Upper lobe of right lung (tissue), 1 donor: ENCODE measurements at regions of chr6 and their contacts with region 1.

Region 1: GRCh38 chr6:157314705-157315321 is 8.5 kb downstream of the TMEM242 start:
- DNase-seq: no peak
- ATAC-seq: peak; percentile 71
- H3K4me3 ChIP-seq: no peak overlapping the region
- H3K27ac ChIP-seq: no peak overlapping the region
- H3K4me1 ChIP-seq: peaks cover 10% of the 10 kb centered on the region
- H3K27me3 ChIP-seq: no peaks in the 10 kb centered on the region
- CTCF ChIP-seq: peak; percentile 81

Region 2: GRCh38 chr6:157597446-157598312 is 282.9 kb after region 1 on chr6:
- intact Hi-C with region 1: loop called (anchors 5 kb)
- DNase-seq: no peak
- ATAC-seq: peak; percentile 73
- H3K4me3 ChIP-seq: no peak overlapping the region
- H3K27ac ChIP-seq: peak overlapping the region; percentile 20
- H3K4me1 ChIP-seq: peaks cover 11% of the 10 kb centered on the region
- H3K27me3 ChIP-seq: no peaks in the 10 kb centered on the region
- CTCF ChIP-seq: peak; percentile 54

Region 3: GRCh38 chr6:157644043-157644810 is 329.4 kb after region 1 on chr6:
- intact Hi-C with region 1: loop called (anchors 10 kb)
- DNase-seq: no peak
- ATAC-seq: peak; percentile 13
- H3K4me3 ChIP-seq: no peak overlapping the region
- H3K27ac ChIP-seq: no peak overlapping the region
- H3K4me1 ChIP-seq: no peaks in the 10 kb centered on the region
- H3K27me3 ChIP-seq: no peaks in the 10 kb centered on the region
- CTCF ChIP-seq: no peak